ENCODE measurements at regions of chr5 and their contacts with region 1.

Region 1: GRCh38 chr5:177071666-177072385 is 14.9 kb upstream of the FGFR4 start:
- DNase-seq: peak; percentile 62
- H3K4me3 ChIP-seq: no peak overlapping the region
- H3K27ac ChIP-seq: no peak overlapping the region
- H3K4me1 ChIP-seq: peaks cover 12% of the 10 kb centered on the region
- H3K27me3 ChIP-seq: no peaks in the 10 kb centered on the region
- CTCF ChIP-seq: peak; percentile 86 to 90

Region 2: DNA sequence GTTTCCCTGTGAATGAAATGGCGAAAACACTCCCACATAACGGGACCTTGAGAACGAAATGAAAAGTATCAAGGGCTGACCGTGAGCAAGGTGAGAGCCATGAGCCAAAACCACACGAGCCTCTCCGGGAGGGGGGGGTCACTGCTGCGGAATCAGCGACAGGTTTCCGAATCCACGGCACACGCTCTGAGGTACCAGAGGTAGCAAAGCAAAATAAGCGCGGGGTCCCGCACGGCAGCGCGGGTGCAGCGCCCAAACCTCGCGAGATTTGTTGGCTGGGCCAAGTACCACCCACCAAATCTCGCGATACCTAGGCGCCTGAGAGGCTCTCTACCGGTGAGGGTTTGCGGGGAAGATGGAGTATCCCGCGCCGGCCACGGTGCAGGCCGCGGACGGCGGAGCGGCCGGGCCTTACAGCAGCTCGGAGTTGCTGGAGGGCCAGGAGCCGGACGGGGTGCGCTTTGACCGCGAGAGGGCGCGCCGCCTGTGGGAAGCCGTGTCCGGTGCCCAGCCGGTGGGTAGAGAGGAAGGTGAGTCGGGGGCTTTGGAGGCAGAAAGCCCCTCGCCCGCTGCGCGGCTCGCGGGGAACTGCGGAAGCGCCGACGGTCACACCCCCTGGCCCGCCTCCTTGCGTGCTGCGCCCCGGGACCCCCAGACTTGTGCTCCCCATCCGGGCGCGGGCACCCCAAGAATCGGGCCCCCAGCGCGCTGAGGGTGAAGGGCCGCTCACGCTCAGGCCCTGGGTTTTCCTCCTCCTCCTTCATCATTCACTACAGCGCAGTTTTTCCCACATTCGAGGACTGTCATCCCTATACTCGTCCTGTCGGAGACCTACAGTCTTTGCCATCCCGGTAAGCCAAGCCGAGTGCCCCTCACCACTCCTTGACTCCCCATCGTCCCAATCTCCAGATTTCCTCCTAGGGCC is 49.2 kb before region 1 on chr5 and contains the start of gene ZNF346:
- CTCF ChIA-PET with region 1: no interaction called
- dilution Hi-C with region 1: loop called (anchors 5 kb)
- in situ Hi-C with region 1: no loop called
- intact Hi-C with region 1: no loop called
- DNase-seq: peak; percentile 83
- H3K4me3 ChIP-seq: peak within 1 kb of the TSS; percentile 85 to 98 (median 90)
- H3K27ac ChIP-seq: peak within 1 kb of the TSS; percentile 54
- H3K4me1 ChIP-seq: peaks cover 7% of the 10 kb centered on the region
- H3K27me3 ChIP-seq: no peaks in the 10 kb centered on the region
- CTCF ChIP-seq: peak in 1 of 2 donors; percentile 47
- total RNA-seq, gene ZNF346: 16.0 to 16.9 TPM

Region 3: DNA sequence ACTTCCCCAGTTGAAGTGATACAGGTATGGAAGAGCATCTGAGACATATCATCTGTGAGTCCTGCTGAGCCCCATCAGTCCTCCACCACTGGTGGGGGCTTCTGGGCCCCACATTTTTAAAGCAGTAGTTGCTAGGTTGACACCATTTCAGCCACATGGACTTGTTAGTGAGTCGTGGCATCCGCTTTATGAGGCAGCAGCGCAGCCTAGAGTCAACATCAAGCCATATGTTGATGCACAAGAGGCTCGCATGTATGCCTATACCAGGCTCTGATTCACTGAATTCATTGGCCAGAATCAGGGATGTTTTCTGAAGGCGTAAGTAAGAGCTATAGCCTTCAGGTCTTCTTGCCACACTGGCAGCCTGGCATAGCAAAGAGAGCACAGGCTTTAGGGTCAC is 22.5 kb before region 1 on chr5:
- CTCF ChIA-PET with region 1: interaction called, 20 read pairs
- dilution Hi-C with region 1: no loop called
- in situ Hi-C with region 1: no loop called
- intact Hi-C with region 1: no loop called
- DNase-seq: no peak
- H3K4me3 ChIP-seq: no peak overlapping the region
- H3K27ac ChIP-seq: no peak overlapping the region
- H3K4me1 ChIP-seq: no peaks in the 10 kb centered on the region
- H3K27me3 ChIP-seq: no peaks in the 10 kb centered on the region
- CTCF ChIP-seq: no peak

Region 4: DNA sequence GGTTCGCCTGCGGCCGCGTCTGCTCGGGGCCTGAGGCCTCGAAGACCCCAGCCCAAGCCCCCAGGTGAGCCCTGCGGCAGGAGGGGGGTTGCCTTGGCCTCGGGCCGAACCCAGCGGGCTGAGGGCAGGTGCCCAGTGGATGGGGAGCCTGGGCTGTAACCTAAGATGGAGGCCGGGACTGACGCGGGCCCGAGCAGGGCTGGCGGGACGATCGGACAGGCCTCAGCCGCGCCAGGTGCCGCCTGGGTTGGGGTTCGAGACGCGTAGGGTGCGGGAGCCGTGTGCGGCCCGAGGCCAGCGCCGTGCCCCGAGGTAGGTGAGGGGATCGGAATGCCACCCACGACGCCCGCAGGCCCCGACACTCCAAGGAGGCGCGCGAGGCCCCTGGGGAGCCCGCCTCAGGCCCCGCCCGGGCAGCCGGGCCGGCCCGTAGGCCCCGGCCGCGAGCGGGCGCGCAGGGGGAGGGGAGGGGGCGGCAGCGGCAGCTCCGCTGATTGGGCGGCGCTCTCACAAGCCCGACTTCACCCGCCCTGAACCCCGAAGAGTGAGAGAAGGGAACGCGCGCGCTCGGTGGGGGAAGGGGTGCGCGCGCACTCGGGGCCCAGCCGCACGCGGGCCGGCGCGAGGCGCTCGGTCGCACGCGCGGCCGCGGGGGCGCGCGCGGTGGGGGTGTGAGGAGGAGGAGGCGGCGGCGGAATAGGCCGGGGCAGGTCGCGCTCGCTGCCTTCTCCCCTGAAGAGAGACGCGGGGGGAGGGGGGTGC is 61.4 kb after region 1 on chr5 and contains the start of gene NSD1:
- CTCF ChIA-PET with region 1: no interaction called
- dilution Hi-C with region 1: loop called (anchors 5 kb)
- in situ Hi-C with region 1: no loop called
- intact Hi-C with region 1: no loop called
- DNase-seq: peak; percentile 57
- H3K4me3 ChIP-seq: peak within 1 kb of the TSS; percentile 67 to 69 (median 69)
- H3K27ac ChIP-seq: peak within 1 kb of the TSS; percentile 63
- H3K4me1 ChIP-seq: peaks cover 34% of the 10 kb centered on the region
- H3K27me3 ChIP-seq: no peaks in the 10 kb centered on the region
- CTCF ChIP-seq: no peak
- total RNA-seq, gene NSD1: 53.0 to 55.7 TPM

Region 5: GRCh38 chr5:177425801-177426565 is 354.2 kb after region 1 on chr5:
- CTCF ChIA-PET with region 1: interaction called, 12 read pairs
- dilution Hi-C with region 1: no loop called
- in situ Hi-C with region 1: no loop called
- intact Hi-C with region 1: no loop called
- DNase-seq: peak; percentile 100
- H3K4me3 ChIP-seq: peak overlapping the region; percentile 51 to 68 (median 54)
- H3K27ac ChIP-seq: peak overlapping the region; percentile 71
- H3K4me1 ChIP-seq: peaks cover 31% of the 10 kb centered on the region
- H3K27me3 ChIP-seq: no peaks in the 10 kb centered on the region
- CTCF ChIP-seq: no peak